AG04449 (cell line): ENCODE measurements at regions of chr4 and their contacts with region 1.

Region 1: GRCh38 chr4:154618708-154619315 is 6.4 kb upstream of the FGG start:
- DNase-seq: no peak
- H3K4me3 ChIP-seq: no peak overlapping the region
- CTCF ChIP-seq: peak; percentile 62

Region 2: DNA sequence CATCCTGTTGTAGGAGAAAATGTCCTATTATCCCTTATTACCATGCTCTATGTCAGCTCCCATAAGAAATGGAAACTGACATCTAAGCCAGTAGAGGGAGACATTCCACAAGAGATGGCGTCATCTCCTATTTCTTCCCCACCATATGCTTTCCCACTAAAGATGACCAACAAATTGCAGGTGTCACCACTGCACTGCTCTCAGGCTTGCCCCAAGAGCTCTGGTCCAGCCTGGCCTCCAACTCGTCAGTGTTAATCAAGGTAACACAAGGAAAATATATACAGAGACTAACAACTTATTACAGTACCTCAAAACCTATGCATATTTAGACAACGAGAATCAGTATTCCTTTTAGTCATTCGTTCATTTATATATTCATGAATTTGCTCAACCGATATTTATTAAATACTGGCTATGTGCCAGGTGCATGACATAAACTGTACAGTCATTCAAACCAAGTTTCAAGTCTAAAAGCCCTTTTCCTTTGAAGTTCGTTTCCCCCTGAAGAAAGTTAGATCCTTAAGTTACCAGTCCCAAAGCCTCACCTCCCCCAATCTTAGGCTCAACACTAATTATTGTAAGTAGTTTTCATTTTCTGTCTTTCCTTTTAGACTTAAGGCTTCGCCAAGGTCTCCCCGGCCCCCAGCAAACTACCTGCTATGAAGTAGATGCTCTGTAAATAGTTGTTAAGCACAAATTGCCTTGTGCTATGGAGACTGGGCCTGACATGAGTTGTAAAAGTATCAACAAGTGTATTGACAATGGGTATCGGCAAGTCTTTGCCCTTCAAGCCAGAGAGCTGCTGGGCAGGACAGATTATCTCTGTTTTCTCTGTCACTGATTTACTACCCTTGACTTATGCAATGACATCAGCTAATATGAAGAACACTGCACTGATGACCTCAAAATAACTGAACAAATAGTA is 59.1 kb before region 1 on chr4:
- CTCF ChIA-PET with region 1: interaction called, 353 read pairs
- POLR2A ChIA-PET with region 1: no interaction called
- DNase-seq: no peak
- H3K4me3 ChIP-seq: no peak overlapping the region
- CTCF ChIP-seq: peak; percentile 59

Region 3: DNA sequence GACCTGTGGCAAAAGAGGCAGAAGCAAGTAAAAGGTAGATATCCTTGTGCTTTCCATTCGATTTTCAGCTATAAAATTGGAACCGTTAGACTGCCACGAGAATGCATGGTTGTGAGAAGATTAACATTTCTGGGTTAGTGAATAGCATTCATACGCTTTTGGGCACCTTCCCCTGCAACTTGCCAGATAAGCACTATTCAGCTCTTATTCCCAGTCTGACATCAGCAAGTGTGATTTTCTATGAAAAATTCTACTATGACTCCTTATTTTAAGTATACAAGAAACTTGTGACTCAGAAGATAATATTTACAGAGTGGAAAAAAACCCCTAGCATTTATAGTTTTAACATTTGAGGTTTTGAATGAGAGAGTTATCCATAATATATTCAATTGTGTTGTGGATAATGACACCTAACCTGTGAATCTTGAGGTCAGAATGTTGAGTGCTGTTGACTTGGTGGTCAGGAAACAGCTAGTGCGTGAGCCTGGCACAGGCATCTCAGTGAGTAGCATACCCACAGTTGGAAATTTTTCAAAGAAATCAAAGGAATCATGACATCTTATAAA is 52.1 kb before region 1 on chr4:
- CTCF ChIA-PET with region 1: interaction called, 353 read pairs
- POLR2A ChIA-PET with region 1: no interaction called
- DNase-seq: no peak
- H3K4me3 ChIP-seq: no peak overlapping the region
- CTCF ChIP-seq: no peak

Region 4: DNA sequence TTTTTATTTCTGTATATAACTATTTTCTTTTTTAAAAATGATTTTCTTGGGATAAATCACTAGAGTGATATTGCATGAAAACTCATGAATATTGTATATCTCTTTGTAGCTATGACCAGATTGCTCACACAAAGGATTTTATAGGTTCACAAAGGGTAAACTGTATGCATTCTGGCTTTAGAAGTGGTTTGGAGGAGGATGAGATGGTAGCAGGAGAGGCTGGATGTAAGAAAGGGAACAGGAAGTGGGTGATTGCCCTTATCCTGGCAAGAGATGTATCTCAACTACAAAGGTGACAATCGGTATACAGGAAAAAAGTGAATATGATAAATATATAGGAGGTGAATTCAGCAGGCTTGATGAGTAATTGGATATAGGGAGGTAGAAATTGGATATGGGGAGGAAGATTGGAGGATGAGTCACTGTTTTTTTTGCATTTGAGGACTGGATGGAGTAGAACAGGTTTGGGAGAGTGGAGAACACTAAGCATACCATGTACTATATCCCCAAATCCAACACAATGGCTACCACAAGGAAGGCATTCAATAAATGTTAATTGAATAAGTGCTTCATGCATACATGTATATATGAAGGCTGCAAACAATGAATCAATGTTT is 16.3 kb before region 1 on chr4:
- CTCF ChIA-PET with region 1: interaction called, 12 read pairs
- POLR2A ChIA-PET with region 1: no interaction called
- DNase-seq: no peak
- H3K4me3 ChIP-seq: no peak overlapping the region
- CTCF ChIP-seq: no peak

Region 5: GRCh38 chr4:154836513-154836912 is 217.7 kb after region 1 on chr4:
- CTCF ChIA-PET with region 1: no interaction called
- POLR2A ChIA-PET with region 1: no interaction called
- DNase-seq: no peak
- H3K4me3 ChIP-seq: no peak overlapping the region
- CTCF ChIP-seq: no peak